Posterior cingulate gyrus (tissue), 11 donors: ENCODE measurements at regions of chr7 and their contacts with region 1.

Region 1: DNA sequence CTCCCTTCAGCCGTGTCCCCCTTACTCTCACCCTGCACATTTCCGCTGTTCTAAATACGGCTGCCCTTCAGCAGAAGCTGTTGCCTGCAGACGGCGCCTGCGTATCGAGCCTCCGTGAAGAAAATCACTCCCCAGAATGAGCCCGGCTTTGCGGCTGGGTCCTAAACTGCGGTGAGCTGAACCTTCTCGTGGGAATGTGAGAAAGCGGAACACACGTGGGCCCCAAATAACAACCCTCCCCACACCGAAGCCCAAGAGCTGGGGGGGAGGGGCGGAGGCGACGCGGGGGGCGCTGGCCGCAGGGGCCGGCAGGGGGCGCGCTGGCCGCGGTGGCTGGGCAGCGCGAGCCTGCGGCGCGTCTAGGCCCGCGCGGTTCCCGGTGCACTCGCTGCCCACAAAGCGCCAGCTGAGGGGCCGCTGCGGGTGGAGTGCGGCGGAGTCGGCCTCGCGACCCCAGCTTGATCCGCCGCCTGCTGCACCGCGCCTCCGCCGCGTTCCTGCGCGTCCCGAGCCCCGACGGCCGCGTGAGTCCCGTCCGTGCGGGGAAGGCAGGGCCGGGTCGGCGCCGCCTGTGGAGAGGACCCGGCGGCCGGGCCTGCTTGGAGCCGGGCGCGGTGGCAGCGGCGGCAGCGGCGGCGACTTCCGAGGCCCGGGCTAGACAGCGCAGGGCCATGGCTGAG is at the start of gene ZNF398:
- DNase-seq: peak; percentile 56 to 96 (median 70)

Region 2: GRCh38 chr7:148712678-148713329 is 434.4 kb before region 1 on chr7:
- intact Hi-C with region 1: no loop called
- DNase-seq: no peak

Region 3: GRCh38 chr7:149125863-149126661 is 21.1 kb before region 1 on chr7 and contains the start of gene ZNF425:
- intact Hi-C with region 1: loop called (anchors 1 kb)
- DNase-seq: peak; percentile 83 to 98 (median 88)

Region 4: DNA sequence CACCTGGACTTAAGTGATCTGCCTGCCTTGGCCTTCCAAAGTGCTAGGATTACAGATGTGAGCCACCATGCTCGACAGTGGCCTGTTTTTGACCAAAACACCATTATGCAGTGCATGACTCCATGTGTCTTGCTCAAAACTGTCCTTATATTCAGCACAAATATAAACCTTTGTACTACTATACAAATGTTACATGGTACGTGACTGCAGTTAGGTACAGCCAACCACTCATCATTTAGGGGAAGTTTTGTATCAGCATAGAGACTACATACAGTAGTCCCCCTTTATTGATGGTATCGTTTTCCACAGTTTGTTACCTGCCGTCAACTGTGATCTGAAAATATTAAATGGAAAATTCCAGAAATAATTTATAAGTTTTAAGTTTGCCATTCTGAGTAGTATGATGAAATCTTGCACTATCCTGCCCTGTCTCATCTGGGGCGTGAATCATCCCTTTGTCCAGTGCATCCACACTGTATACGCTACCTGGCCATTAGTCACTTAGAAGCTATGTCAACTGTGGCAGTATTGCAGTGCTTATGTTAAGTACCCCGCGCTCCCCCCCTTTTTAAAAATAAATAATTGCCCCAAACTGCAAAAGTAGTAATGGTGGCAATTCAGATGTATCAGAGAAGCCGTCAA is 24.8 kb after region 1 on chr7:
- intact Hi-C with region 1: no loop called
- DNase-seq: no peak